ENCODE measurements at regions of chr15 and their contacts with region 1.

Region 1: GRCh38 chr15:40044717-40045571 is 6.0 kb upstream of the SRP14 start:
- DNase-seq: peak; percentile 70 to 82 (median 75)
- H3K4me3 ChIP-seq: peak overlapping the region in 1 of 2 donors; percentile 1
- H3K4me3 Mint-ChIP-seq: peak overlapping the region; percentile 1 to 73 (median 46)
- H3K27ac ChIP-seq: peak overlapping the region; percentile 24
- H3K27ac Mint-ChIP-seq: peak overlapping the region in 6 of 7 donors; percentile 47 to 91 (median 73)
- H3K4me1 ChIP-seq: peaks cover 55% of the 10 kb centered on the region
- H3K4me1 Mint-ChIP-seq: peaks cover 36 to 61% (median 41%) of the 10 kb centered on the region in 4 donors
- H3K27me3 ChIP-seq: no peaks in the 10 kb centered on the region
- H3K27me3 Mint-ChIP-seq: no peaks in the 10 kb centered on the region

Region 2: GRCh38 chr15:40069178-40070165 is 24.5 kb after region 1 on chr15:
- CTCF ChIA-PET with region 1: no interaction called
- POLR2A ChIA-PET with region 1: no interaction called
- intact Hi-C with region 1: no loop called
- DNase-seq: no peak
- H3K4me3 ChIP-seq: no peak overlapping the region
- H3K4me3 Mint-ChIP-seq: no peak overlapping the region
- H3K27ac ChIP-seq: no peak overlapping the region
- H3K27ac Mint-ChIP-seq: no peak overlapping the region
- H3K4me1 ChIP-seq: no peaks in the 10 kb centered on the region
- H3K4me1 Mint-ChIP-seq: peaks cover 2 to 8% (median 5%) of the 10 kb centered on the region in 4 donors
- H3K27me3 ChIP-seq: no peaks in the 10 kb centered on the region
- H3K27me3 Mint-ChIP-seq: peaks cover 0 to 3% of the 10 kb centered on the region in 2 donors

Region 3: GRCh38 chr15:40098489-40099261 is 53.7 kb after region 1 on chr15:
- CTCF ChIA-PET with region 1: interaction called, 175 read pairs
- POLR2A ChIA-PET with region 1: interaction called, 63 read pairs
- intact Hi-C with region 1: no loop called
- DNase-seq: peak in 3 of 5 donors; percentile 20 to 66 (median 35)
- H3K4me3 ChIP-seq: no peak overlapping the region
- H3K4me3 Mint-ChIP-seq: peak overlapping the region in 7 of 8 donors; percentile 28 to 74 (median 59)
- H3K27ac ChIP-seq: no peak overlapping the region
- H3K27ac Mint-ChIP-seq: peak overlapping the region; percentile 77 to 92 (median 87)
- H3K4me1 ChIP-seq: peaks cover 51% of the 10 kb centered on the region
- H3K4me1 Mint-ChIP-seq: peaks cover 12 to 42% (median 28%) of the 10 kb centered on the region in 4 donors
- H3K27me3 ChIP-seq: no peaks in the 10 kb centered on the region
- H3K27me3 Mint-ChIP-seq: peaks cover 0 to 2% of the 10 kb centered on the region in 2 donors